ENCODE measurements at regions of chr10 and their contacts with region 1.

Region 1: DNA sequence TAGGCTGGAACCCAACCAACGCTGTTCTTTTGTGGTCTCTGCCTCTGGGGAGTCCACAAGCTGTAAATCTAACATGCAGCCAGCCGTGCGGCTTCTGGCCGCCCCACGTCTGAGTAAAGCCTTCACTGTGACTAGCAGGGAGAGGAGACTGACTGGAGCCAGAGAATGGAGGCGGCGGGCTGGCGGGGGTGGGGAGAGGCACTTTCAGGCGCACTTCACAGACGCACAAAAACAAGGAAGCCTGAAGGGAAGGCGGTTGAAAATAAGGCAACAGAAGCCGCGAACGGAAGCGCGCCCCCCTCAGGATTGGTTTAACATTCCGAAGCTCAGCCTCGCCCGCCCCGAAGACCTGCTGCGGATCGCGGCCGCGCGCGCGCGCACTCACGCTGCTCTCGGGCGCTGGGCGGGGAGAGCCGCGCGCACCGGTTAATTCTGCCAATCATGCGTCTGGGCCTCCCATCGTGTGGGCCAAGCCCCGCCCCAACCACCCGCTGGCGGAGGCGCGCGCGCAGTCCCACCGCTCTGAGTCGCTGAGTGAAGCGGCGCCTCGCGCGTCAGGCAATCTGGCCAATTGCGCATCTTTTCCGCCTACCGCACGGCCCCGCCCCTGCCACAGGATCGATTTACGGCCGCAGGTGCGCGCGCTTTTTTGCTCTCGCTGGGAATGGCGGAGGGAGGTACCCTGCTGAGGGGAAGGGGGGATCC is at the start of gene SFR1:
- DNase-seq: peak; percentile 99
- ATAC-seq: peak; percentile 93
- H3K4me3 Mint-ChIP-seq: peak within 1 kb of the TSS; percentile 91
- H3K27ac Mint-ChIP-seq: peak within 1 kb of the TSS; percentile 97
- H3K4me1 Mint-ChIP-seq: peaks cover 47% of the 10 kb centered on the region
- H3K27me3 Mint-ChIP-seq: no peaks in the 10 kb centered on the region
- total RNA-seq, gene SFR1: 17.2 to 20.5 TPM

Region 2: DNA sequence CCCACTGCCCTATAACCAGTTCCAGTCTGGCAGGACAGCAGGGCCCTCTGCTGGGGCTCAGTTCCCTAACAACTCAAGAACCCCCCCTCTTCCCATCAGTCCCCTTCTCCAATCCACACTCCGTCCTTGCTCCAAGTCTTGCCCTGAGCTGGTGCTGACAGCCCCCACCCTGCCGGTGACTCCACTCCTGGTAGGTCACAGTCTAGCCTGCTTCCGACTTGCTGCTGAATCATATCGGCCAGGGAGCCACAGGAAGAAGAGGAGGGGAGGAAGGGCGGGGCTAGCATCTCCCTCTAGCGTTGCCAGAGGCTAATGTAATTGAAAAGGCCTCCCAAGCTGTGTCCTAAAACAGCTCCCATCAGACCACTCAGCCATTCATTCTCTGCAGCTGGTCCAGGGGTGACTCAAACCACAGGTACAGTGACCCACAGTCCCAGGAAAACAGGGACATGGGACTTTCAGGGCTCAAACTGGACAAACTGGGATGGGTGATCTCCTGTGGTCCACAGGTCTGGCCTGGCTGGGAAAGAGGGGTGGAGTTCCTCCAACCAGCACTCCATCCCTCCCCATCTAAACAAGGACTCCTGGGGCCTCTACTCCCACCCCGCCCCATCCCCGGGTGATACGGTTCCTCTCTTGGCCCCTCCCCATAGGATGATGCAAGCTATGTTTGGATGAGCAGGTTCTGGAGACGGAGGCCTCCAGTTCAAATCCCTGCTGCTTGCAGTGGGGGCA is 425.1 kb before region 1 on chr10:
- CTCF ChIA-PET with region 1: interaction called, 3 read pairs
- POLR2A ChIA-PET with region 1: interaction called, 3 read pairs
- intact Hi-C with region 1: loop called in 1 of 2 experiments (anchors 5 kb)
- DNase-seq: peak; percentile 90
- ATAC-seq: peak; percentile 94
- H3K4me3 Mint-ChIP-seq: peak overlapping the region; percentile 33
- H3K27ac Mint-ChIP-seq: peak overlapping the region; percentile 71
- H3K4me1 Mint-ChIP-seq: peaks cover 31% of the 10 kb centered on the region
- H3K27me3 Mint-ChIP-seq: peaks cover 2% of the 10 kb centered on the region

Region 3: DNA sequence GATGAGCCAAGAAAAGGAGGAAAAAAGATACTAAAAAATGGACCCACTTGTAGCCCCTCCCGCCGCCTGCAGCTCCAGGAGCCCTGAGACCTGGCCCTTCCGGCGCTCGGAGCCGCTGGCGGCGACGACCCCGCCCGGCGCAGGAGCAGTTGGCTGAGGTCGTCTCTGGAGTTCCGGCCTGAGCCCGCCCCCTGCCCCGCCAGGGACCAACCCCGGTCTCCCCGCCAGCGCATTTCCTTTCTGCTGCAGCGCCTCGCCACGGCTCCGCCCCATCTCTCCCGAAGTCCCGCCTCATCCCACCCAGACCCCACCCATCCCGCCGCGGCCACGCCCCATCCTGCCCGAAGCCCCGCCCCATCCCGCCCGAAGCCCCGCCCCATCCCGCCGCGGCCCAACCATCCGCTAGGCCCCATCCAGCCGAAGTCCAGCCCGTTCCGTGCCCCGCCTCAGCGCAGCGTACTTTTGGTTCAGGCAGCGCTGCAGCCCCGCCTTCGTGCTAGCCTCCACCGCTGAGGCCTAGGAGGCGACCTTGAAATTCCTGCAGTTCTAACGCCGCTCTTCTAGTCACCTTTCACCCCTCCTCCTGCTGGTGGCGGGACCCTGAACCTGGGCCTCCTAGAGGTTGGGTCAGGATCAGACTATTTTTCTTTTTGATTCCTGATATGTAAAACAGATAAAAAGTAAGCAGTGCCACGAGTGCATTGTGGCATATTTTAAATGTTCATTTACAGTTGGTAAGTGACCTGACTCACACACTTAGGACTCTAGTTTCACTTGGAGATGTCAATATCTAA is 203.4 kb before region 1 on chr10 and contains the start of gene STN1:
- CTCF ChIA-PET with region 1: interaction called, 6 read pairs
- POLR2A ChIA-PET with region 1: interaction called, 3 read pairs
- intact Hi-C with region 1: loop called (anchors 1 kb)
- DNase-seq: peak; percentile 98
- ATAC-seq: peak; percentile 93
- H3K4me3 Mint-ChIP-seq: peak within 1 kb of the TSS; percentile 96
- H3K27ac Mint-ChIP-seq: peak within 1 kb of the TSS; percentile 99
- H3K4me1 Mint-ChIP-seq: peaks cover 32% of the 10 kb centered on the region
- H3K27me3 Mint-ChIP-seq: no peaks in the 10 kb centered on the region
- total RNA-seq, gene STN1: 34.4 to 37.4 TPM

Region 4: GRCh38 chr10:104092749-104093148 is 28.9 kb before region 1 on chr10:
- CTCF ChIA-PET with region 1: interaction called, 4 read pairs
- POLR2A ChIA-PET with region 1: no interaction called
- intact Hi-C with region 1: loop called in 1 of 2 experiments (anchors 2 kb)
- DNase-seq: no peak
- ATAC-seq: no peak
- H3K4me3 Mint-ChIP-seq: no peak overlapping the region
- H3K27ac Mint-ChIP-seq: no peak overlapping the region
- H3K4me1 Mint-ChIP-seq: peaks cover 19% of the 10 kb centered on the region
- H3K27me3 Mint-ChIP-seq: no peaks in the 10 kb centered on the region

Region 5: DNA sequence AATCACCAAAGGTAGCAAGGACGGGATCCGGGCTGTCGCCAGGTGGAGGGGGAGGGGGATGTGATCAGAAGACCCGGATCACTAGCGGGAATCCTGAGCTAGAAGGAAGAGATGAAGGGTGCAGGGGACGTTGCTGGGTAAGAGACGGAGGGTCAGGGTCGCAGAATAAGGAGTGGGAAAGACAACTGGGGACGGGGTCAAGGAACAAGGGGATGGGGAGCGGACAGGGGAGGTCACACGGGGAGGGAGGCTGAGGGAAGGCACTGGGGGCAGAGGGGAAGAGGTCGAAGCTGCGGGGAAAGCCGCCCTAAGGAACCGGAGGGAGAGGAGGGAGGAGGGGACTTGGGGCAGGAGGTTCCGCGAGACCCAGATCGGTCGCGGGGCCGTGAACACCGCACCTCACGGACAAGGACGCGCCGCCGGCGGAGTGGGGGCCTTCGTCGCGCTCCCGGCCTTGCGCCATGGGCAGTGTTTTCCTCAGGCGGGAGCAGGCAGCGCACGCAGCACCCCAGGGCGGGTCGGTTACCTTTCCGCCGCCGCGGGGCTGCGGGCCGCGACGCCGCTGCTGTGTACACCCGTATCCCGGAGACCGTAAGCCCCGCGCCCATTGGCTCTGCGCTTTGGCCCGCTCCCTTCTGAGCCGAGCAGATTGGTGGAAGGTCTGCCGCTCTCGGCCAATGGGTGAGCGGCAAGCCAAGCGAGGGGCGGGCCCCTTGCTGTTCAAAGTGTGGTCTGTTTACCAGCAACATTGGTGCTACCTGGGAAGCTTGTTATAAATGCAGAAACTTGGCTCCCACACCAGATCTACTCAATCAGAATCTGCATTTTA is 110.3 kb after region 1 on chr10 and contains the start of gene CFAP43:
- CTCF ChIA-PET with region 1: interaction called, 3 read pairs
- POLR2A ChIA-PET with region 1: no interaction called
- intact Hi-C with region 1: loop called in 1 of 2 experiments (anchors 1 kb)
- DNase-seq: peak; percentile 100
- ATAC-seq: peak; percentile 100
- H3K4me3 Mint-ChIP-seq: peak within 1 kb of the TSS; percentile 78
- H3K27ac Mint-ChIP-seq: peak within 1 kb of the TSS; percentile 21
- H3K4me1 Mint-ChIP-seq: peaks cover 5% of the 10 kb centered on the region
- H3K27me3 Mint-ChIP-seq: peaks cover 13% of the 10 kb centered on the region
- total RNA-seq, gene CFAP43: 0.09 TPM

Region 6: DNA sequence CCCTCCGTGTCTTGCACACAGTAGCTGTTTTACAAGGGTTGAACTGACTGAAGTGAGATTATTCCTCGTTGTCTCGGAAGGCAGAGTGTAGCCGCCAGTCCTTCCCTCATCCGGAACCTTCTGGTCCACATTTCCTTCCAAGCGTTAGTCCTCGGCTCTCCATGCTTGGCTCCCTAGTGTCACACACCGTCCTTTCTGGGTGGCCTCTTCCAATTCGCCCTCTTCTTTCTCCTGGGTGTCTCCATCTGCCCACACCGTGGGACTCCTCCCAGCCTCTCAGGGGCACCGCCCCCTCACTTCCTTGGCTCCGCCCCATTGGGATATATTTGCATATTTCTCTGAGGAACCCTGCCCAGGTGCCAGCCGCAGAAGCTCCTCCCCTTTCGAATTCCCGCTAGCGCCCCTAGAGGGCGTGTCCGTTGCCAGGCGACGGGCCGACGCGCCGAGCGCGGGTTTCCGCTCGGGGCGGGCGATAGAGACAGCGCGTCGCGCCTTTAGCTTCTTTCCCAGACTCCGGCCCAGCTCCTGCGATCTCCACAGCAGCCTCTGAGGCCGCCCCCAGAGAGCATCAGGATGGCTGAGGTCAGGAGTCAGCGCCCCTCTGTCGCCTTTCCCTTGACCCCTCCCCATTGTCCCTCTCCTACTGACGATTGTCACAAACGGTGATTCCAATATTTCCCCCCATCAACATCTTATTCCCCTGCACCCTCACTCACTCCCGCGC is 231.8 kb after region 1 on chr10 and contains the start of gene CFAP58:
- CTCF ChIA-PET with region 1: interaction called, 4 read pairs
- POLR2A ChIA-PET with region 1: interaction called, 5 read pairs
- intact Hi-C with region 1: loop called (anchors 2 to 5 kb)
- DNase-seq: peak; percentile 94
- ATAC-seq: peak; percentile 77
- H3K4me3 Mint-ChIP-seq: peak within 1 kb of the TSS; percentile 11
- H3K27ac Mint-ChIP-seq: peak within 1 kb of the TSS; percentile 30
- H3K4me1 Mint-ChIP-seq: no peaks in the 10 kb centered on the region
- H3K27me3 Mint-ChIP-seq: no peaks in the 10 kb centered on the region
- total RNA-seq, gene CFAP58: 0.60 to 0.64 TPM

Region 7: GRCh38 chr10:105170521-105170920 is 1048.8 kb after region 1 on chr10:
- CTCF ChIA-PET with region 1: no interaction called
- POLR2A ChIA-PET with region 1: no interaction called
- intact Hi-C with region 1: no loop called
- DNase-seq: no peak
- ATAC-seq: no peak
- H3K4me3 Mint-ChIP-seq: no peak overlapping the region
- H3K27ac Mint-ChIP-seq: no peak overlapping the region
- H3K4me1 Mint-ChIP-seq: no peaks in the 10 kb centered on the region
- H3K27me3 Mint-ChIP-seq: no peaks in the 10 kb centered on the region

Measured in activated CD4-positive, alpha-beta T cell treated with anti-CD3 and anti-CD28 coated beads for 36 hours (primary cell).